ENCODE measurements at regions of chr9 and their contacts with region 1.

Region 1: GRCh38 chr9:3732077-3733038 is 206.6 kb upstream of the RFX3 start:
- DNase-seq: no peak
- H3K4me3 ChIP-seq: peak overlapping the region in 1 of 8 donors; percentile 34
- H3K27ac ChIP-seq: peak overlapping the region in 2 of 8 donors; percentile 21 to 43
- H3K4me1 ChIP-seq: peaks cover 4 to 17% (median 9%) of the 10 kb centered on the region in 6 donors
- H3K27me3 ChIP-seq: no peaks in the 10 kb centered on the region
- CTCF ChIP-seq: peak; percentile 37 to 82 (median 68)
- POLR2A ChIP-seq: no peak

Region 2: DNA sequence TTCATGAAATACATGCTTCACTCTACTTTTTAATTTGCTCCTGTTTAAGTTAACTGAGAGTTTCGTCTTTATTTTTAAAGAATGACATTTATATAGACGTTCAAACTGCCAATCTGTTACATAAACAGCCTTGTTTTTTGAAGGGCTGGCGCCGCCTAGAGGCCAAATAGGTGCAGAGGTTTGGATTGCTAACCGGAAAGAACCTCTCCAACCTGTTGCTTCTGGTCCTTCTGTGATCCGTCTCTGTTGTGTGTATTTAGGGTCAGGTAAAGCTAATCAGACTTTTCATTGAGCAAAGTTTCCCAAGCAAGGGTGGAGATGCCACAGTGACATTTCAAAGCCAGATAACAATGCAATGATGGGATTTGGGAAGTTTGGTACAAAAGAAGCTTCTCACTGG is 607.0 kb after region 1 on chr9:
- intact Hi-C with region 1: loop called (anchors 5 kb)
- DNase-seq: peak; percentile 88
- H3K4me3 ChIP-seq: no peak overlapping the region
- H3K27ac ChIP-seq: no peak overlapping the region
- H3K4me1 ChIP-seq: peaks cover 0 to 9% (median 4%) of the 10 kb centered on the region in 6 donors
- H3K27me3 ChIP-seq: no peaks in the 10 kb centered on the region
- CTCF ChIP-seq: peak; percentile 26 to 90 (median 76)
- POLR2A ChIP-seq: no peak

Measured in spleen (tissue), 13 donors.